ENCODE measurements at regions of chr17 and their contacts with region 1.

Region 1: GRCh38 chr17:42677921-42678781 is 1.4 kb upstream of the PLEKHH3 start:
- DNase-seq: peak; percentile 90
- H3K4me3 ChIP-seq: peak overlapping the region; percentile 74
- H3K27ac ChIP-seq: peak overlapping the region; percentile 68
- H3K4me1 ChIP-seq: peaks cover 70% of the 10 kb centered on the region
- CTCF ChIP-seq: no peak

Region 2: DNA sequence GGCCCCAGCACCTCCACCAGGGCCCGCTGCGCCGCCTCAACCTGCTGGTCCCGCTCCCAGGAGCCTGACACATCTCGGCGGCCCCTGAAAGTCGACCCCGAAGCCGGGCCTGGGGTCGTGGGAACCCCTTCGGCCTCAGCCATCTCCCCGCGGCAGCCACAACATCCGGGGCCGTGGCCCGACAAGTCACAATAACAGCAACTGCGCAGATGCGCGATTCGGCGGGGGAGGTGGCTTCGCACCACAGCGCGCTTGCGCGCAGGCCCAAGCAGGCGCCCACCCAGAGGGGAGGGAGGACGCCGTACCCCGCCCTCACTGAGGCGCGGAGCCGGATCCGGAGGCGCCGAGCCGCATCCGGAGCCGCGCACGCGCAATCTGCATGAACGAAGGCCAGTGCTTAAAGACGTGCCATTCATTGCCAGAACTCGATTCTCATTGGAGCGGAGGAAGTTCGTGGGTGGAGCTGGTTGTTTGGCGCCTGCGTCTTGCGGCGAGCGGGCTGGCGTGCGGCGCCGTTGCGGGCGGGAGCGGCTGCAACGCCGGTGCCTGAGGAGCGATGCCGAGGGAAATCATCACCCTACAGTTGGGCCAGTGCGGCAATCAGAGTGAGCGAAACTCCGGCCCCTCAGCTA is 68.9 kb before region 1 on chr17 and contains the starts of genes RETREG3 and TUBG1:
- CTCF ChIA-PET with region 1: no interaction called
- POLR2A ChIA-PET with region 1: interaction called, 9 read pairs
- intact Hi-C with region 1: loop called (anchors 2 kb)
- DNase-seq: peak; percentile 99
- H3K4me3 ChIP-seq: peak within 1 kb of the TSS; percentile 88
- H3K27ac ChIP-seq: peak within 1 kb of the TSS; percentile 74
- H3K4me1 ChIP-seq: peaks cover 31% of the 10 kb centered on the region
- CTCF ChIP-seq: no peak
- total RNA-seq, gene RETREG3: 33.5 and 34.1 TPM in 2 replicates
- total RNA-seq, gene TUBG1: 93.7 and 113 TPM in 2 replicates

Region 3: GRCh38 chr17:42659079-42659931 is 18.8 kb before region 1 on chr17 and contains the start of gene TUBG2:
- CTCF ChIA-PET with region 1: no interaction called
- POLR2A ChIA-PET with region 1: interaction called, 7 read pairs
- intact Hi-C with region 1: loop called (anchors 2 kb)
- DNase-seq: peak; percentile 88
- H3K4me3 ChIP-seq: peak within 1 kb of the TSS; percentile 70
- H3K27ac ChIP-seq: no peak within 1 kb of the TSS
- H3K4me1 ChIP-seq: peaks cover 17% of the 10 kb centered on the region
- CTCF ChIP-seq: no peak
- total RNA-seq, gene TUBG2: 5.5 and 10.4 TPM in 2 replicates